ENCODE measurements at regions of chrX and their contacts with region 1.

Region 1: DNA sequence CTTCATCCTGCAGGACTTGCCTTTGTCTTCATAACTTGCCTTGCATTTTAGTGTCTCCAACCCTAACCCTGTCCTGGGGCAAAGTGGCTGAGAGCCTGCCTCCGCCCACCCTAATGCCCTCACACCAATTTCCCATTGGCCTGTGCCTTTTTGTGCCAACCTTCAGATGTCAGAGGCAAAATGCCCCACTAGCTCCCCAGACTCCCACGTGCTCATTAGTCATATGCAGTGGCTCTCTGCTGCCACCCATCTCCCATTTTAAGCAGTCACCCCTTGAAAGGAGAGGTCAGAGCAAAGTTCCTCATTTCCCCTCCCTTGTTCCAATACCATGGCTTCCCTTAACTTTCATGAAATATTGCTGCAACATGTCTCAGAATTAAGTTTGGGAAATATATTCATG is 74.8 kb upstream of the PASD1 start:
- DNase-seq: peak; percentile 13
- H3K4me3 Mint-ChIP-seq: no peak overlapping the region
- H3K27ac Mint-ChIP-seq: no peak overlapping the region
- H3K4me1 Mint-ChIP-seq: no peaks in the 10 kb centered on the region
- H3K27me3 Mint-ChIP-seq: no peaks in the 10 kb centered on the region

Region 2: DNA sequence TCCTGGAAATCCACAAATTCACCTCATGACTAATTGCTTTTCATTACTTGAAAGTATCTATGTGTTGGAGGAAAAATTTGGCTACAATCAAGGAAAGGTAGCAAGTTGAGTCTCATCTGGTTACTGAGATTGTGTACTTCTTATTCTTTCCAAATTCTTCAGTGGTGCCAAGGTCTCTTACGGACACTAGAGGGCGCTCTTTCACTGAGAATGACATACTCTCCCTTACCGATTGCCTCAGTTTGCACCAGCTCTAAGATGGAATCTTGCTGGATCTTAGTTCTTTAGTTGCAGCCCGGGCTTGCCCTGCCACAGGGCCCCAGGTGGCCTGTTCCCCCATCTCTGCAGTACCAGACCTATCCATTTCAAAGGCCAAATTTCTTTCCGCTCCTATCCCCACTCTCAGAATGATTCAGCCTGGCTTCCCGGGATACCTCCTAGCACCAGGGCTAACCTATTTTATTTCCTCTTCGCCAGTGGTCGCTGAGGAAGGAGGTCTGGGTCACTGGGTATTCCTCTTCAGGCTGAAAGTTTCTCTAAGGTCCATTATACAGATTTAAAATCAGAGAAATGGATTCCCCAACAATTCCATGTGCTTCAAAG is 336.9 kb before region 1 on chrX:
- CTCF ChIA-PET with region 1: interaction called, 4 read pairs
- POLR2A ChIA-PET with region 1: no interaction called
- intact Hi-C with region 1: loop called (anchors 2 kb)
- DNase-seq: peak; percentile 25
- H3K4me3 Mint-ChIP-seq: no peak overlapping the region
- H3K27ac Mint-ChIP-seq: no peak overlapping the region
- H3K4me1 Mint-ChIP-seq: no peaks in the 10 kb centered on the region
- H3K27me3 Mint-ChIP-seq: peaks cover 15% of the 10 kb centered on the region

Measured in activated CD4-positive, alpha-beta memory T cell treated with anti-CD3 and anti-CD28 coated beads for 36 hours (primary cell).